AG04449 (cell line): ENCODE measurements at regions of chr11 and their contacts with region 1.

Region 1: DNA sequence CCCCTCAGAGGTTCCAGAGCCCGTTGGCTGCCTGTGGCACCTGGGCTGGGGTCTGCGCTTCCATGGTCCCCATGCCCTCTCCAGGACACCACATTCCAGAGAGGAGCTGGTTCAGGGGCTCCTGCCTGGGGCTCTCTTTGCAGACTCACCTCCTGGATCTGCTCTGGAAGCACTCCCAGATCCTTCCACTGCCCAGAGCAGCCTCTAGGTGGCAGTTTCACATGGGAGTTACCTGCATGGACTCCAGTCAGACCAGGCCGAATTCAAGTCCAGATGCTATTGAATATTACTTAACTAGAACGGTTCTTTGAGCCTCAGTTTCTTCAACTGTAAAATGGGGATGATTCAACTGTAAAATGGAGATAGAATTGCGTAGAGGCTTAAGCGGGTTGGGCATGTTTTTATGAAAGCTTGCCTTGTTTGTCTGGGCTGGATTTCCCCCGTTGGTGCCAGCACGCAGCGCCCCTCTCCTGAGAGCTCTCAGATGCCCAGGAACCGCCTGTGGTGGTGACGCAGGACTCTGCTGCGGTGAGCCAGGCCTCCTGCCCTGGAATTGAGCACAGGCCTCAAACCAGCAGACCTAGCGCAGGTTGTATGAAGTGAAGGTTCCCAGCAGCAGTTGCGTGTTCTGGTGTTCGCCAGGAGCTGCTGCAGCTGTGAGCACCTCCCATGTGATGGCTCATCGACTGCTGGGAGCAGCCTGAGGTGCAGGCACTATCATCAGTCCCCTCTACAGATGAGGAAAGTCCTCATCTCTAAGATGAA is 44.2 kb downstream of the LMO1 start:
- DNase-seq: no peak
- H3K4me3 ChIP-seq: no peak overlapping the region
- CTCF ChIP-seq: peak; percentile 72

Region 2: DNA sequence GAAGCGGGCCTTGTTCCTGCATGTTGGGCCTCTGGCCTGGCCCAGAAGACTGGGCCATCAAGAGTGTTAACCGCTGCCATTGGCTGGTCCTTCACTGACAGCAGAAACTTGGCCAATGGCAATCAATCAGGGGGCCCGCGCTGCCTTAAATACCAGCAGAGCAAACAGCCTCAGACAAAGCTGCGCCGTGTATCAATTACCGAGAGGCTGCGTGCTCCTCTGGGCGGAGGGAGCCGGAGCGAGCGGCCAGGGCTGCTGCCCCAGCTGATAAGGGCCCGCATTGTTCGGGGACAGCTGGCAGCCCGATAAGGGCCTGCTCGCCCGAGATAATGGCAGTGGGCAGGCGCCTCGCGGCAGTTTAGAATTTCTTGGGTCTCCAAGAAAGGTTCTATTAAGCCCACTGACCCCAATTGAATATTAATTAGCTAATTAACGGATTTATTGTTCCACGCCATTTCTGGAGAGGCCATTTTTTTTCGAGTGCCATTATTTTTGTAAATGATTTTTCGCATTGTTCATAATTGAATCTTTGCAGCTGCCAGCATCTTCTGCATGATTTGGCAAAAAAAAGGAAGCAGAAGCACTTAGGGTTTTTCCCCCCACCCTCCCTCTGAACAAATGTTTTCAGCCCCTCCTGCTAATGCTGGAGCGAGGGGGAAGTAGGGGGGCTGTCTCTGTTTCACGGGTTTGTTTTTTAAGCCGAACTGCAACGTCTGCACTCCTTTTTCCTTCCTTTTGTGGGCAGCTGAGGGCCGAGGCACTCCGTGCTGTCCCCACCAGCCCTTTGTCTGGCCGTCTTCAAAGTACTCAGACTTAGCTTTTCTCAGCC is 13.0 kb before region 1 on chr11:
- CTCF ChIA-PET with region 1: interaction called, 10 read pairs
- POLR2A ChIA-PET with region 1: no interaction called
- DNase-seq: no peak
- H3K4me3 ChIP-seq: no peak overlapping the region
- CTCF ChIP-seq: no peak

Region 3: DNA sequence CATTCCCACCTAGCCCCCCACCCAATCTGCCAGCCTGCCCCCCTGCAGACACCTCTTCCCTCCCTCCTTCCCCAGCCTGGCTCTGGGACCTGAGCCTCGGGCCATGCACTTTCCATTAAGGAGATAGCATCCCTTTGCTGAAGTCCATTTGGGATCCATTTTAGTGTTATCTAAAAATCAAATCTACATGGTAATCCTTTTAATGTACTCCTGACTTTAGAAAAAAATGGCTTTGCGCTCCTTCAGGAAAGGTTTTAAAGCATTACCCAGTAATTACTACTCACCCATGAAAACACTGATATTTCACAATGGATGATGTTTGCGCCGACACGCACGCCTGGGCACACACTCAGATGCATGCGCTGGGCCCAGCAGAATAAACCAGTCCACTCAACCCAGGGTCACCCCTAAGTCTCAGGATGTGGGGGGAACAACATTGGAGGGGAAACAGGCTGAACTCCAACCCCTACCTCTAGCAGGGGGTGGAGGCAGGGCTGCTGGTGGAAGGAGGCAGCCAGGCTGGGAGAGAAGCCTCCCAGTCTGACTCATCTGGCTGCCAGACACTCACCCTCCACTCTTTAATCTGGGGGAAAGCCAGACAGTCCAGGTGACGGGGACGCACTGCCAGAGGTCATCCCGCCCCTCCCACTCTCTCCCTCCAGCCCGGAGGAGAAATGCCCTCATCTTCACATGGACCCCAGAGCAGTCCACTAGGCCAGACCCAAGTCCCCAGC is 14.4 kb after region 1 on chr11:
- CTCF ChIA-PET with region 1: interaction called, 42 read pairs
- POLR2A ChIA-PET with region 1: no interaction called
- DNase-seq: no peak
- H3K4me3 ChIP-seq: no peak overlapping the region
- CTCF ChIP-seq: no peak